WTC11 (cell line): ENCODE measurements at regions of chr3 and their contacts with region 1.

Region 1: DNA sequence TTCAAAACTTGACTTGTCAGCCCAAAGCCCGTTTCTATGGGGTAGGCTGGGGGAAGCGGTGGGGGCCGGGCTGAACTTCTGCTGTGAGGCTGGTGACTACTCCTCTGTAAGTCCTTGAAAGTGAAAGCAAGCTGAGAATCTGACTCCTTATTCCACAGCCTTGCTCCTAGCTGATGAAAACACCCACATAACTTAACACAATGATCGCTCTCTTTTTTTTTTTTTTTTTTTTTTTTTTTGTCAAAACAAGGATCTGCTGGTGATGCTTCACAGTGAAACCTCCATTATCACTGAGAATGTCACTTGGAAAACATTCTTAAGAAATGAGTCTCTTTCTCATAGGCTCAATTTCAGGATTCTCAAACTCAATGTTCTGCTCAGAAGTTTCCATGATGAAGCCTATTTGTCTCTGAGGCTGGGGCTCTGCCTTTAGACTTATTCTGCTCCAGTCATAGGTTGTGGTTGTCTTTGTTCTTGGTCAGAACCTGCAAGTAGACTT is 31.4 kb upstream of the TKT start:
- DNase-seq: peak; percentile 60
- ATAC-seq: peak; percentile 90
- H3K4me3 Mint-ChIP-seq: peak overlapping the region; percentile 52; the same call in 1 of the 2 replicates
- H3K27ac Mint-ChIP-seq: peak overlapping the region; percentile 96
- H3K4me1 Mint-ChIP-seq: peaks cover 52% of the 10 kb centered on the region
- H3K27me3 Mint-ChIP-seq: no peaks in the 10 kb centered on the region
- CTCF ChIP-seq: no peak

Region 2: DNA sequence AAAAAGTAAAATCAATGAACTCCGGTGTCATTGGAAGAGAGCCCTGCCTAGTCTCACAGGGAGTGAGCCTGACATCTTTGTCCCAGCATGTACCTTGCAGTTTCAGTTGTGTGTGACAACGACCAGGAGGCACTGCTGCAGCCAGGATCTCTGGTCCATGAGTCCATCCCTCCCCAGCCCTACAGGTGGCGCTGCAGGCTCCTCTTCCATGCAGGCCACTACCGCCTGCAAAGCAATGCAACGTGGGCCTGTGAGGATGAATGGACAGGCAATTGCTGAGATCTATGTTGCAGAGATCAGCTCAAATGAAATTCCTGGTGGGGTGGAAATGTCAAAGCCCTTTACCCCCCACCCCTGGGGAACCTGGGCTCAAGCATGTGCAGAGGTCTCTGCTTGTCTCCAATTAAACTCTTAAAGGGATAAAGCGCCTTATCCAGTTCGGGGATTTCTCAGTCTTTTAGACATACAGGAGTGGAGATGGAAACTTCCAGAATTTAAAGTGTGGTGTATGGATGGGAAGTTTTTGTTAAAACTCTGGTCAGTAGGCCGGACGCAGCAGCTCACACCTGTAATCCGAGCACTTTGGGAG is 67.2 kb before region 1 on chr3:
- CTCF ChIA-PET with region 1: interaction called, 13 read pairs
- POLR2A ChIA-PET with region 1: no interaction called
- DNase-seq: peak; percentile 93
- ATAC-seq: peak; percentile 84
- H3K4me3 Mint-ChIP-seq: no peak overlapping the region
- H3K27ac Mint-ChIP-seq: peak overlapping the region; percentile 63; the same call in 1 of the 2 replicates
- H3K4me1 Mint-ChIP-seq: peaks cover 5% of the 10 kb centered on the region
- H3K27me3 Mint-ChIP-seq: peaks cover 6% of the 10 kb centered on the region; the same call in 1 of the 2 replicates
- CTCF ChIP-seq: peak; percentile 94